PC-3 (cell line): ENCODE measurements at regions of chr9 and their contacts with region 1.

Region 1: GRCh38 chr9:111896353-111896958 is at the start of gene UGCG:
- DNase-seq: peak; percentile 90
- ATAC-seq: peak; percentile 79
- H3K4me3 ChIP-seq: peak within 1 kb of the TSS; percentile 77
- H3K27ac ChIP-seq: peak within 1 kb of the TSS; percentile 80
- H3K4me1 ChIP-seq: peaks cover 37% of the 10 kb centered on the region
- H3K27me3 ChIP-seq: no peaks in the 10 kb centered on the region
- CTCF ChIP-seq: no peak
- total RNA-seq, gene UGCG: 27.0 and 29.4 TPM in 2 replicates

Region 2: GRCh38 chr9:111099199-111100008 is 797.1 kb before region 1 on chr9:
- CTCF ChIA-PET with region 1: no interaction called
- POLR2A ChIA-PET with region 1: no interaction called
- intact Hi-C with region 1: no loop called
- DNase-seq: no peak
- ATAC-seq: no peak
- H3K4me3 ChIP-seq: no peak overlapping the region
- H3K27ac ChIP-seq: no peak overlapping the region
- H3K4me1 ChIP-seq: peaks cover 8% of the 10 kb centered on the region
- H3K27me3 ChIP-seq: no peaks in the 10 kb centered on the region
- CTCF ChIP-seq: no peak

Region 3: DNA sequence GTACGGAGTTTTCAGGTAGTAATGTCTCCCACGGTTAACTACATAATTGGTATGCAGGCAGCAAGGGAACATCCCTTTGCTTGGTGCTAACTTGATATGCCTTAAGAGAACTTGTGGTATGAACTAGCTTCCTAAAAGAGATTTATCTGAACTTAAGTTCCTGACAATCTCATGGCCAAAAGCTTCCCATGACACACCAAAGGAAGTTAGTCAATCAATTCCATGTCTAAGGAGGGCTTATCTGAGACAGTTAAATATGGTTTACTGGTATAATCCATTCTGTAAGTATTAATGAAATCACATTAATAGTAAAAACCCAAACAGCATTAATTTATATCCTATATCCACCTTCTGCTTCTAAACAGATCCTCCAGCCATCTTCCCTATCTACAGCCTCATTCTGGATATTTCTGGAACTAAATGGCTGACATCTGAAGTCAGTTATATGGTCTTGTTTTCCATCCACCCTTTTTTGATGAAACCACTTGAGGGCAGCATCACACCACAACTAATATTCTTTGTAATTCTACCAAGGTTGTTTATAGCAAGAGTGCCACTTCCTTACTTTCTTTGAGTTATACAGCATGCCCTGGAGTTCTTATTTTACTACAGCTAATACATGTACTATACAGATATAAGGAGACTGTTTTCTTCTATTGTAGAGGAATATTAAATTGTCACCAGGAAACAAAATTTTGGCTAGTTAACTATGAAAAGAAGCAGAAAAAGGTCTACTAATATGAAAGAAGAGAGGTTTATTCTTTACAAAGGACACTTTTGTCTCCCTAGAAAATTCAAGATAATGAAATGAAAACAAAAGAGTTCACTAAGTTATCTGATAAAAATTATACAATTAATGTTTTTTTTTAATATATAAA is 136.5 kb before region 1 on chr9:
- CTCF ChIA-PET with region 1: no interaction called
- POLR2A ChIA-PET with region 1: no interaction called
- intact Hi-C with region 1: loop called (anchors 5 kb)
- DNase-seq: peak; percentile 79
- ATAC-seq: peak; percentile 76
- H3K4me3 ChIP-seq: no peak overlapping the region
- H3K27ac ChIP-seq: peak overlapping the region; percentile 34; the same call in 1 of the 2 replicates
- H3K4me1 ChIP-seq: no peaks in the 10 kb centered on the region; the same call in 1 of the 2 replicates
- H3K27me3 ChIP-seq: no peaks in the 10 kb centered on the region
- CTCF ChIP-seq: peak; percentile 73

Region 4: GRCh38 chr9:111805830-111806241 is 90.6 kb before region 1 on chr9:
- CTCF ChIA-PET with region 1: no interaction called
- POLR2A ChIA-PET with region 1: interaction called, 7 read pairs
- intact Hi-C with region 1: loop called (anchors 2 kb)
- DNase-seq: peak; percentile 88
- ATAC-seq: peak; percentile 96
- H3K4me3 ChIP-seq: peak overlapping the region; percentile 25; the same call in 1 of the 2 replicates
- H3K27ac ChIP-seq: peak overlapping the region; percentile 99
- H3K4me1 ChIP-seq: peaks cover 27% of the 10 kb centered on the region
- H3K27me3 ChIP-seq: no peaks in the 10 kb centered on the region
- CTCF ChIP-seq: no peak

Region 5: DNA sequence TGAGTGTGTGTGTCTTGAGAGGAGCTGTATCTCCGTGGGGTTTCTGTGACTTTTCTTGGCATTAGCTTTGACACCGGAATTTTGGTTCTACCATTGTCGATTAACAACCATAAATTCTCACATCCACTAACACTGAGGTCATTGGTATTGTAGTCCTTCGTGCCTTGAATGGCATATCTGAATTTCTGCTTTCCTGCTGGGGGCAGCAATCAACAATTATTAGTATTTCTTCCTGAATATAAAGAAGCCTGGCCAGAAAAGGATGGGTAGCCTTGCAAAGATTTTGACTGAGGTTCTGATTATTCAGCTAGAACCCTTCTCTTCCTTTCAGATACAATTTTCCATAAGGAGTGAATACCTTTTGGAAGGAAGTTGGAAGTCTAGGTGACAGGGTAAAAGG is 68.3 kb before region 1 on chr9:
- CTCF ChIA-PET with region 1: no interaction called
- POLR2A ChIA-PET with region 1: no interaction called
- intact Hi-C with region 1: loop called (anchors 5 kb)
- DNase-seq: peak; percentile 40
- ATAC-seq: no peak
- H3K4me3 ChIP-seq: no peak overlapping the region
- H3K27ac ChIP-seq: no peak overlapping the region
- H3K4me1 ChIP-seq: no peaks in the 10 kb centered on the region
- H3K27me3 ChIP-seq: no peaks in the 10 kb centered on the region
- CTCF ChIP-seq: peak; percentile 40; the same call in 1 of the 2 replicates

Region 6: GRCh38 chr9:111851566-111851965 is 44.9 kb before region 1 on chr9:
- CTCF ChIA-PET with region 1: no interaction called
- POLR2A ChIA-PET with region 1: interaction called, 17 read pairs
- intact Hi-C with region 1: loop called (anchors 5 kb)
- DNase-seq: peak; percentile 93
- ATAC-seq: peak; percentile 86
- H3K4me3 ChIP-seq: no peak overlapping the region
- H3K27ac ChIP-seq: peak overlapping the region; percentile 80
- H3K4me1 ChIP-seq: peaks cover 27% of the 10 kb centered on the region
- H3K27me3 ChIP-seq: no peaks in the 10 kb centered on the region
- CTCF ChIP-seq: 0 out of 2 replicates have a peak, but pooled peaks have one; percentile 14

Region 7: GRCh38 chr9:112020680-112021596 is 124.5 kb after region 1 on chr9:
- CTCF ChIA-PET with region 1: no interaction called
- POLR2A ChIA-PET with region 1: no interaction called
- intact Hi-C with region 1: loop called (anchors 2 kb)
- DNase-seq: peak; percentile 89
- ATAC-seq: peak; percentile 90
- H3K4me3 ChIP-seq: no peak overlapping the region
- H3K27ac ChIP-seq: peak overlapping the region; percentile 95
- H3K4me1 ChIP-seq: peaks cover 23% of the 10 kb centered on the region
- H3K27me3 ChIP-seq: no peaks in the 10 kb centered on the region
- CTCF ChIP-seq: no peak

Region 8: GRCh38 chr9:112061152-112061740 is 164.8 kb after region 1 on chr9:
- CTCF ChIA-PET with region 1: no interaction called
- POLR2A ChIA-PET with region 1: interaction called, 4 read pairs
- intact Hi-C with region 1: loop called (anchors 5 kb)
- DNase-seq: peak; percentile 90
- ATAC-seq: peak; percentile 60
- H3K4me3 ChIP-seq: no peak overlapping the region
- H3K27ac ChIP-seq: peak overlapping the region; percentile 84
- H3K4me1 ChIP-seq: peaks cover 36% of the 10 kb centered on the region
- H3K27me3 ChIP-seq: no peaks in the 10 kb centered on the region
- CTCF ChIP-seq: no peak

Region 9: GRCh38 chr9:112299514-112299913 is 403.1 kb after region 1 on chr9:
- CTCF ChIA-PET with region 1: no interaction called
- POLR2A ChIA-PET with region 1: no interaction called
- intact Hi-C with region 1: no loop called
- DNase-seq: peak; percentile 24
- ATAC-seq: peak; percentile 29; the same call in 1 of the 2 replicates
- H3K4me3 ChIP-seq: no peak overlapping the region
- H3K27ac ChIP-seq: no peak overlapping the region
- H3K4me1 ChIP-seq: peaks cover 8% of the 10 kb centered on the region; the same call in 1 of the 2 replicates
- H3K27me3 ChIP-seq: no peaks in the 10 kb centered on the region
- CTCF ChIP-seq: no peak